ENCODE measurements at regions of chr1 and their contacts with region 1.

Region 1: GRCh38 chr1:221886743-221887413 is 145.0 kb upstream of the DUSP10 start:
- DNase-seq: peak; percentile 68 to 85
- ATAC-seq: peak; percentile 88 to 92
- H3K4me3 ChIP-seq: peak overlapping the region in 1 of 4 donors; percentile 11
- H3K27ac ChIP-seq: peak overlapping the region; percentile 59 to 72 (median 66)
- H3K4me1 ChIP-seq: peaks cover 22 to 23% of the 10 kb centered on the region in 2 donors
- H3K27me3 ChIP-seq: no peaks in the 10 kb centered on the region
- CTCF ChIP-seq: no peak
- POLR2A ChIP-seq: no peak

Region 2: DNA sequence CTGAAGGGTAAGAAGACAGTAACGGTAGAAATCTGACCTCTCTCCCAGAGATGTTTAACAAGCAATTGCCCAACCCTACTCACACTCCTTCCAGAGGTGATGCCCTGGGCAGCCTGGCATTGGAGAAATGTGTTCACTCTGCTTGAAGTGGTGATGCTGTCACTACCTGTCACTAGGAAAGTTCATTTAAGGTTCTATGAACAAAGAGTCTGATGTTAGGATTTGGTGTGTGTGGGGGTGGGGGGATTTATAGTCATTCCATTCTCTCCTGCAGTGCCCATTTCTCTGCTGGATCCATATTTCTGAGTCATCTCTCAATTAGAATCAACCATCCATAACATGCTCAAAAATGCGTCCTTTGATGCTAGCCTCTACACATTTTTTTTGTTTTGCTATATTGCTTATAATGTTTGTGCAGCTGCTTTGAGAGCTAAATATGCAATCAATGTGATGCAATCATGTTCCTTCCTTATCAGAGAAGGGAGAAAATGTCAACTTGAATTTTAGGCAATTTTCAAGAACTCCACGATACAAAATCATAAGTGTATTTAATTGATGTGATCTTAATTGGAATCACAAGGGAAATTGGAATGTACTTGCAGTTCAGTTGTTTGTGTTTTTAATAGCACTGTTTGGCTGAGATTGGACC is 318.9 kb before region 1 on chr1:
- in situ Hi-C with region 1: no loop called
- intact Hi-C with region 1: loop called (anchors 10 kb)
- DNase-seq: no peak
- ATAC-seq: no peak
- H3K4me3 ChIP-seq: no peak overlapping the region
- H3K27ac ChIP-seq: no peak overlapping the region
- H3K4me1 ChIP-seq: peaks cover 16 to 36% of the 10 kb centered on the region in 2 donors
- H3K27me3 ChIP-seq: no peaks in the 10 kb centered on the region
- CTCF ChIP-seq: no peak
- POLR2A ChIP-seq: no peak

Region 3: DNA sequence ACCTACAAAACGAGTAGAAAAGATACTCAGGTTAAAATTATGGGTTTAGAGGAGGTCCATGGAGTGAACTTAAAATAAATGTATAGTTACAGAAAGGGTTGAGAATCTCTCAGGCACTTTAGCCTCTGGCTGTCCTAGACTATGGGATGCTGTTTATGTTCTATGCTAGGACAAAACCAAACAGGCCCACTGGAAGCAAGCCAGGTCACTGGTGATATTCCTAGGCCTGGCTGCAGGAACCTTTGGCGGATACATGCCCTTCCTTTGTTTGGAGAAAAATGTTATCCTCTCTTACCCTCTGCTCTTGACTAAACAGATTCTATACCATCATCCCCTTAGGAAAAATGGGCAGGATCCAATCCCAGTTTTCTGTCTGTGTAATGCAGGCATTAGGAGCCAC is 54.3 kb before region 1 on chr1:
- in situ Hi-C with region 1: no loop called
- intact Hi-C with region 1: no loop called
- DNase-seq: no peak
- ATAC-seq: no peak
- H3K4me3 ChIP-seq: no peak overlapping the region
- H3K27ac ChIP-seq: no peak overlapping the region
- H3K4me1 ChIP-seq: no peaks in the 10 kb centered on the region
- H3K27me3 ChIP-seq: no peaks in the 10 kb centered on the region
- CTCF ChIP-seq: no peak
- POLR2A ChIP-seq: no peak

Region 4: GRCh38 chr1:221845650-221846371 is 41.1 kb before region 1 on chr1:
- in situ Hi-C with region 1: no loop called
- intact Hi-C with region 1: loop called (anchors 5 kb)
- DNase-seq: peak; percentile 33 to 62
- ATAC-seq: peak; percentile 92 to 93
- H3K4me3 ChIP-seq: peak overlapping the region in 1 of 4 donors; percentile 9
- H3K27ac ChIP-seq: peak overlapping the region; percentile 33 to 70 (median 54)
- H3K4me1 ChIP-seq: peaks cover 0 to 16% of the 10 kb centered on the region in 2 donors
- H3K27me3 ChIP-seq: no peaks in the 10 kb centered on the region
- CTCF ChIP-seq: no peak
- POLR2A ChIP-seq: no peak

Region 5: DNA sequence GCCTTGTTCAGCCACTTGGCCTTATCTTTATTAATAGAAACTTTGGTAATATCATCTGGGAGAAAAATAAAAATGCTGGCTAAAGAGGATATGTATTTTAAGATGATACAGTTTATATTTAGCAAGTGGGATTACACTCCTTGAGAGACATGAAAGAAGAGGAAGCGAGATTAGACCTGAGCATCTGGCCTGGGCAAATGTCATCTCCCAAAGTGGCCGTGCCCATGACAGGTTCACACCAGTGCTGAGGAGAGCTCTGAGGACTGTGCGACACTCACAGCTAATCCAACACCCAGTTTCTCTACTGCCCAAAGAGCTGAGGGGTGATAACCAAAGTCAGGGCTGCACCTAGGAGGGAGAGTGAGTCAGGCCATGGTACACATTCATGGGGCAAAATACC is 23.2 kb before region 1 on chr1:
- in situ Hi-C with region 1: no loop called
- intact Hi-C with region 1: loop called (anchors 2 kb)
- DNase-seq: no peak
- ATAC-seq: peak; percentile 31 to 54
- H3K4me3 ChIP-seq: no peak overlapping the region
- H3K27ac ChIP-seq: peak overlapping the region; percentile 73 to 80 (median 79)
- H3K4me1 ChIP-seq: peaks cover 12 to 17% of the 10 kb centered on the region in 2 donors
- H3K27me3 ChIP-seq: no peaks in the 10 kb centered on the region
- CTCF ChIP-seq: no peak
- POLR2A ChIP-seq: no peak

Region 6: DNA sequence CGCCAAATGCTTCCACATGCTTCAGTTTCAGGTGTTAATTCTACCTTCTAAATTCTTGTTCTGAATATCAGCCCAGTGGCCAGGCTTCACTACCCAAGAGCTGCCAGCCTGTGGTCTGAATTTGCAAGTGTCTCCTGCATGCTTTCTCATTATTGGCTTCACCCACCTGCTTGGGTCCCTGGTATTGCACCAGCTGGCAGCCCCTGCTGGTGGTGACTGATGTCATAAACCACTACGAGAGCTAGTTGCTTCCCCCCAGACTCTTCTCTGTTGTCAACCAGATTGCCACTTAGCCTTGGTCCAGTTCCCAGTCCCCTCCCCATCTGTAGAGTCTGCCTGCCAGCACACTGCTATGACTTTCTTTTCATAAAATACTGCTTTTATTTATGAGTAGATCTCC is 52.7 kb after region 1 on chr1:
- in situ Hi-C with region 1: no loop called
- intact Hi-C with region 1: no loop called
- DNase-seq: no peak
- ATAC-seq: no peak
- H3K4me3 ChIP-seq: no peak overlapping the region
- H3K27ac ChIP-seq: no peak overlapping the region
- H3K4me1 ChIP-seq: no peaks in the 10 kb centered on the region
- H3K27me3 ChIP-seq: no peaks in the 10 kb centered on the region
- CTCF ChIP-seq: no peak
- POLR2A ChIP-seq: no peak

Region 7: GRCh38 chr1:222043444-222044292 is 156.8 kb after region 1 on chr1:
- in situ Hi-C with region 1: no loop called
- intact Hi-C with region 1: loop called (anchors 5 kb)
- DNase-seq: peak in 1 of 2 donors; percentile 38
- ATAC-seq: peak; percentile 22 to 27
- H3K4me3 ChIP-seq: no peak overlapping the region
- H3K27ac ChIP-seq: peak overlapping the region; percentile 66 to 89 (median 76)
- H3K4me1 ChIP-seq: peaks cover 35 to 48% of the 10 kb centered on the region in 2 donors
- H3K27me3 ChIP-seq: no peaks in the 10 kb centered on the region
- CTCF ChIP-seq: no peak
- POLR2A ChIP-seq: no peak

Measured in gastrocnemius medialis (tissue), 4 donors.